PC-9 (cell line): ENCODE measurements at regions of chr14 and their contacts with region 1.

Region 1: DNA sequence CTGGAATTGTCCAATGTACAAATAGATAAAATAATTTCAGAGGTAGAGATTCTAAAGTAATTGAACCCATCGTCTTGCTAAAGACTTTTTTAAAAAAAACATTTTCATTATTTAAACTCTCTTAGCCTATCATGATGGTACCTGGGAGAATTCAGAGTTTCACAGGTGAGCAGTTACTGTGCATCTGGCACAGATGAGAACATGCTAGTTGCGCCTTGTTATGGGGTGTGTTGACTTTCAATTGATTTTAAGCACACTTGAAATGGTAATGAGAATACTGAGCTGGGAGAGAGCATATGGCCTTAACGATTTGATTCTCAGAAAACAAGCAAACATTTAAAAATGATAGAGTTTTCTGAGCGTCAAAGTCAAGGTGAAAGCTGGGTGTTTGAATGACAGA is 66.6 kb downstream of the FLRT2 start:
- DNase-seq: no peak
- H3K4me3 ChIP-seq: no peak overlapping the region
- H3K27ac ChIP-seq: no peak overlapping the region
- H3K4me1 ChIP-seq: no peaks in the 10 kb centered on the region
- H3K27me3 ChIP-seq: no peaks in the 10 kb centered on the region
- CTCF ChIP-seq: no peak

Region 2: DNA sequence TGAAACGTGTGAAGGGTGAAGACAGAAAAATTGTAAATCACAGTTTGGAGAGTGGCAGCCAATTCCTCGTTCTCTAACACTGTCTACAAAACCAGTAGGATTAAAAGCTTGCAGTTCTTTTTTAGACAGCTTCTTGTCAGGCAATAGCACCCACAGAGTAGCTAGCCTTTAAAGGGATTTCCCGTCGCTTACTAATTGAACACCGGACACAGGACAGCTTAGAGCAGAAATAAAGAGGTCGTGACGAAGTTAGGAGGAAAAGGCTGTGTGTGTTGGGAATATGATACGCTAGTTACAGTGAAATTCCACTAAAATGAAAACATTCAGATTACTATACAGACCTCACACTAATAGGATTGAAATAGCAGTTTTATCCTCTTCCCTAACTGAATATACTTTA is 215.7 kb before region 1 on chr14:
- CTCF ChIA-PET with region 1: no interaction called
- POLR2A ChIA-PET with region 1: no interaction called
- intact Hi-C with region 1: no loop called
- DNase-seq: no peak
- H3K4me3 ChIP-seq: no peak overlapping the region
- H3K27ac ChIP-seq: no peak overlapping the region
- H3K4me1 ChIP-seq: no peaks in the 10 kb centered on the region
- H3K27me3 ChIP-seq: no peaks in the 10 kb centered on the region
- CTCF ChIP-seq: no peak

Region 3: DNA sequence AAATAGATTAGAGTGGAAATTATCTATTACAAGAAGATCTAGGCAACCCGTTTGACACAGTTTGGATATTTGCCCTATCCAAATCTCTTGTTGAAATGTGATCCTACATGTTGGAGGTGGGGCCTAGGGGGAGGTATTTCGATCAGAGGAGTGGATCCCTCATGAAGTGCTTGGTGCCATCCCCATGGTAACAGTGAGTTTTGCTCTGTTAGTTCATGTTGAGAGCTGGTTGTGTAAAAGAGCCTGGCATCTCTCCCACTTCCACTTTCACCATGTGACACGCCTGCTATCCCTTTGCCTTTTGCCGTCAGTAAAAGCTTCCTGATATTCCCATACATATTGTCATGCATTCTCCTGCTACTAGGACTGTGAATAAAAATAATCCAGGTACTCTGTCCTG is 133.1 kb before region 1 on chr14:
- CTCF ChIA-PET with region 1: no interaction called
- POLR2A ChIA-PET with region 1: no interaction called
- intact Hi-C with region 1: no loop called
- DNase-seq: no peak
- H3K4me3 ChIP-seq: no peak overlapping the region
- H3K27ac ChIP-seq: no peak overlapping the region
- H3K4me1 ChIP-seq: no peaks in the 10 kb centered on the region
- H3K27me3 ChIP-seq: no peaks in the 10 kb centered on the region
- CTCF ChIP-seq: no peak

Region 4: GRCh38 chr14:85607651-85608081 is 11.1 kb after region 1 on chr14:
- CTCF ChIA-PET with region 1: interaction called, 15 read pairs
- POLR2A ChIA-PET with region 1: no interaction called
- intact Hi-C with region 1: no loop called
- DNase-seq: peak in 1 of 2 experiments; percentile 52
- H3K4me3 ChIP-seq: no peak overlapping the region
- H3K27ac ChIP-seq: no peak overlapping the region
- H3K4me1 ChIP-seq: no peaks in the 10 kb centered on the region
- H3K27me3 ChIP-seq: no peaks in the 10 kb centered on the region
- CTCF ChIP-seq: no peak

Region 5: GRCh38 chr14:85731186-85731585 is 134.6 kb after region 1 on chr14:
- CTCF ChIA-PET with region 1: no interaction called
- POLR2A ChIA-PET with region 1: no interaction called
- intact Hi-C with region 1: no loop called
- DNase-seq: no peak
- H3K4me3 ChIP-seq: no peak overlapping the region
- H3K27ac ChIP-seq: no peak overlapping the region
- H3K4me1 ChIP-seq: no peaks in the 10 kb centered on the region
- H3K27me3 ChIP-seq: no peaks in the 10 kb centered on the region
- CTCF ChIP-seq: no peak